ENCODE measurements at regions of chr10 and their contacts with region 1.

Region 1: DNA sequence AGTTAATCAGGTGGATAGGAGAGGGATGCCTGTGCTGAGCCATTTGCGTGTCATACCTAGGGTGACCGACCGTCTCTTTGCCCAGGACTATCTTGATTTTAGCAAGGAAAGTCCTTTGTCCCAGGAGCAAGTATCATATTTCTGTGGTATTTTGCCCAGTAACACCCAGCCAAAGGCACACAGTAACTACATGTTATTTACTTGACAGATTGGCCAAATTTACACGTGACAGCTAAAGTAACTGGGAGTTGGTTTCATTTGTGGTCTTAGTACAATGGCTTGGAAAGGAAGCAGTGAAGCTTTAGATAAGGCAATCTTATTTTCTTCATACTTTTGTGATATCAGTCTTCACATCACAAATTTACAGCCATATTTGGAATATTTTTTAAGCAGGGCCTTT is 142.1 kb downstream of the JCAD start:
- DNase-seq: no peak
- ATAC-seq: no peak
- H3K4me3 ChIP-seq: no peak overlapping the region
- H3K27ac ChIP-seq: no peak overlapping the region
- H3K4me1 ChIP-seq: peaks cover 6% of the 10 kb centered on the region
- H3K27me3 ChIP-seq: no peaks in the 10 kb centered on the region
- CTCF ChIP-seq: no peak

Region 2: DNA sequence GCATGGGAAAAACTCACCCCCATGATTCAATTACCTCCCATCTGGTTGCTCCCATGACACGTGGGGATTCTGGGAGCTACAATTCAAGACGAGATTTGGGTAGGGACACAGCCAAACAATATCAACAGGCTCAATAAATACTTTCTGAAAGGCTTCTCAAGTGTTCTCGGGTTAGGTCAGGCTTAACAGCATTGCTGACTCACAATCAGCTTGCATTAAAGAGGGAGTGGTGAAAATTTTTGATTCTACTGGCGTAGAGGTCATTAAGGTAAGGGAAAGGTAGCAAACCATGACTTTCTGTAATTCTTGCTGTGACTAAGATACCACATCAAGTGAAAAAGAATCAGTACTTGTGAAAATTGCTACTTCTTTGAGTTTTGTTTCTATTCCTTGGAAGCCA is 15.7 kb after region 1 on chr10:
- intact Hi-C with region 1: loop called in 1 of 2 experiments (anchors 2 kb)
- DNase-seq: no peak
- ATAC-seq: no peak
- H3K4me3 ChIP-seq: no peak overlapping the region
- H3K27ac ChIP-seq: no peak overlapping the region
- H3K4me1 ChIP-seq: no peaks in the 10 kb centered on the region
- H3K27me3 ChIP-seq: no peaks in the 10 kb centered on the region
- CTCF ChIP-seq: no peak

Measured in psoas muscle (tissue), 8 donors.